AG04450 (cell line): ENCODE measurements at regions of chr4 and their contacts with region 1.

Region 1: GRCh38 chr4:77347341-77347966 is 190.4 kb downstream of the CCNG2 start:
- DNase-seq: no peak
- H3K4me3 ChIP-seq: no peak overlapping the region
- H3K27ac ChIP-seq: no peak overlapping the region
- H3K27me3 ChIP-seq: peaks cover 5% of the 10 kb centered on the region
- CTCF ChIP-seq: no peak

Region 2: DNA sequence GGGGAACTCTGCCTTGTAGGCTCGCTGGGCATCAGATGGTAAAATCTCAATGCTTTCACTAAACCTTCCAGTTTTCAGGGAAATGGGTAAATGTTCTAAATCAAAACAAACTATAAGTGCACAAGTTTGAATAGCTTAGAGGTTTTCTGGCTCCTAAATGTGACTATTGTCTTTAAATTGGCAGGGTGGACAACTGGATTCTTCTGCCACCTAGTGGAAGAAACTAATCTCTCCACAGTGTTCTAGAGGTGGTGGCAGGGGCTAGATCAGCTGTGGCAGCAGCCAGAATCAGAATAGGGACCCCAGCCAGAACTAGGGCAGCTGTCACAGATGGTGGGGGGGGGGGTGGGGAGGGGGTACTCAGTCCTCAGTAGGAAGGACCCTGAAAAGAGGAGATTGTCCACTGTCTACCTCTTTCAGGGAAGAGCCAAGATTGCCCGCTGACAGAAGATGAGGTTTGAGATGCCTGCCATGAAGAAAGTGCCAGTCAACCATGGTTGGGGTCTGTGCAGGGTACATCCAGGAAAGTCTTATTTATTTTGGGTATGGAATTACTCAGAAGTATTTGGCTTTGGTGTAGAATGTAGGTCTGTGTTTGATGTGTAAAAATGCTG is 11.0 kb after region 1 on chr4:
- CTCF ChIA-PET with region 1: interaction called, 18 read pairs
- POLR2A ChIA-PET with region 1: no interaction called
- DNase-seq: no peak
- H3K4me3 ChIP-seq: no peak overlapping the region
- H3K27ac ChIP-seq: no peak overlapping the region
- H3K27me3 ChIP-seq: peaks cover 8% of the 10 kb centered on the region
- CTCF ChIP-seq: peak; percentile 72

Region 3: DNA sequence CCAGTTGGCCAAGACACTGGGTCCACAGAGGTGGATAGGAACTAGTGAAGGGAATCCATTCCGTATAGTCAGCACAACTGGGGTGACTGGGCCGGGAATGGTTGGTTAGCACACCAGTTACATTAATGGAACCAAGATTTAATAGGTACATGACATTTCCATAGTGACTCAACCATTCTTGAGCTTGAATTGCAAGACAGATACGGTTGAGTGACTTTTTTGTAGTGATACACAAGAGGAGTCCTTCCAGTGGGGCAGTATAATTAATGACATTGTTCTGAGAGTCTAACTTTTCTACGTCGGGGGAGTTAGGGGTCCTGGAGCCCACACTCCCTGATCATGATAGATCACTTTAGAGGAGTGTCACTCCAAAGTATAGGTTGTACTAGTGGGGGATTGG is 46.5 kb after region 1 on chr4:
- CTCF ChIA-PET with region 1: no interaction called
- POLR2A ChIA-PET with region 1: no interaction called
- DNase-seq: no peak
- H3K4me3 ChIP-seq: no peak overlapping the region
- H3K27ac ChIP-seq: no peak overlapping the region
- H3K27me3 ChIP-seq: no peaks in the 10 kb centered on the region
- CTCF ChIP-seq: no peak